Activated B cell treated with CpG ODN at 0.5 μM for 24 hours (primary cell): ENCODE measurements at regions of chr10 and their contacts with region 1.

Region 1: GRCh38 chr10:30529373-30529998 is 95.5 kb downstream of the MAP3K8 start:
- DNase-seq: peak; percentile 78
- ATAC-seq: peak; percentile 84
- H3K4me3 Mint-ChIP-seq: peak overlapping the region; percentile 86
- H3K27ac Mint-ChIP-seq: peak overlapping the region; percentile 98
- H3K4me1 Mint-ChIP-seq: peaks cover 76% of the 10 kb centered on the region
- H3K27me3 Mint-ChIP-seq: no peaks in the 10 kb centered on the region
- CTCF ChIP-seq: no peak

Region 2: DNA sequence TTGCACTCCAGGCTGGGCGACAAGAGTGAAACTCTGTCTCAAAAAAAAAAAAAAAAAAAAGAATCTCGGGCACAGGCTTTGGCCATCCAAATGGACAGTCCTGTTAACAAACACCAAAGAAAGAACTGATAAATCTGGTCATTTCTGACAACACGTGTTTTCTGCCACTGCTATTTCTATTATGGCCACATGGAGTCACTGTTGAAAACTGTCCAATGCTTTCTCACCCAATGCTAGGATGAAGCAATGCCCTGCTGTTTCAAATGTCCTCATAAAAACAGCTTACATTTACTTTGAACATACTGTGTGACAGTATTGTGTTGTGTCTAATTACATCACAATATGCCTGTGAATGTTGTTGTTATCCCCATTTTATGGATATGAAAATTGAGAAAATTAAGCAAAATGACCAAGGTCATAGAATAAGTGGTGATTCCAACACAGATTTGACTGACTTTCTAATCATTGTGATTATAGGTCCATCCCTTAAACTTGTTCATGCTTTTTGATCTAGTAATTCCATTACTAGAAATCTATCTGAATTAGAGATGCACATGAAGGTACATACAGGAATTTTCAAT is 115.4 kb before region 1 on chr10:
- CTCF ChIA-PET with region 1: interaction called, 42 read pairs
- POLR2A ChIA-PET with region 1: interaction called, 24 read pairs
- intact Hi-C with region 1: loop called (anchors 1 kb)
- DNase-seq: no peak
- ATAC-seq: peak; percentile 67
- H3K4me3 Mint-ChIP-seq: no peak overlapping the region
- H3K27ac Mint-ChIP-seq: peak overlapping the region; percentile 73
- H3K4me1 Mint-ChIP-seq: peaks cover 45% of the 10 kb centered on the region
- H3K27me3 Mint-ChIP-seq: no peaks in the 10 kb centered on the region
- CTCF ChIP-seq: peak; percentile 70

Region 3: DNA sequence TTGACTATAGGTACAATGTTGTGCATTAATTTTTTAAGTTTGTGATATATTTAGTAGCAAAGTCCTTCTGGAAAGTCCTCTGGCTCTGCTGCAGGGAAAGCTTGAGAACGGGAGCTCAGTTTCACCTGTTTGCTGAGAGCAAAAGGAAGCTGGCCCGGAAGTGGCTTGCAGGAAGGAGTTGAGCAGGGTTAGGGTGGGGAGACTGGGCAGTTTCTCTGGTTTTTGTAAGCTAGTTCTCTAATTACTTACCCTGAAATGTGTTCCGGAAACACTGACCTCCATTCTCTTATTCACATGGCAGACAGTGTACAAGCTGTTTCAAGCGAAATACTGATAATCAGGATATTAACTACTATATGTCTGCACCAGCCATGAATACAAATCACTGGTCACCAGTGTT is 73.2 kb before region 1 on chr10:
- CTCF ChIA-PET with region 1: interaction called, 20 read pairs
- POLR2A ChIA-PET with region 1: interaction called, 23 read pairs
- intact Hi-C with region 1: loop called (anchors 1 kb)
- DNase-seq: no peak
- ATAC-seq: peak; percentile 63
- H3K4me3 Mint-ChIP-seq: peak overlapping the region; percentile 53
- H3K27ac Mint-ChIP-seq: peak overlapping the region; percentile 81
- H3K4me1 Mint-ChIP-seq: peaks cover 46% of the 10 kb centered on the region
- H3K27me3 Mint-ChIP-seq: no peaks in the 10 kb centered on the region
- CTCF ChIP-seq: no peak

Region 4: GRCh38 chr10:30488316-30488715 is 41.2 kb before region 1 on chr10:
- CTCF ChIA-PET with region 1: interaction called, 6 read pairs
- POLR2A ChIA-PET with region 1: interaction called, 23 read pairs
- intact Hi-C with region 1: loop called (anchors 1 kb)
- DNase-seq: no peak
- ATAC-seq: peak; percentile 70
- H3K4me3 Mint-ChIP-seq: peak overlapping the region; percentile 66
- H3K27ac Mint-ChIP-seq: peak overlapping the region; percentile 89
- H3K4me1 Mint-ChIP-seq: peaks cover 63% of the 10 kb centered on the region
- H3K27me3 Mint-ChIP-seq: no peaks in the 10 kb centered on the region
- CTCF ChIP-seq: no peak

Region 5: GRCh38 chr10:30502266-30503060 is 27.0 kb before region 1 on chr10:
- CTCF ChIA-PET with region 1: no interaction called
- POLR2A ChIA-PET with region 1: interaction called, 17 read pairs
- intact Hi-C with region 1: loop called (anchors 2 kb)
- DNase-seq: no peak
- ATAC-seq: peak; percentile 85
- H3K4me3 Mint-ChIP-seq: peak overlapping the region; percentile 79
- H3K27ac Mint-ChIP-seq: peak overlapping the region; percentile 83
- H3K4me1 Mint-ChIP-seq: peaks cover 89% of the 10 kb centered on the region
- H3K27me3 Mint-ChIP-seq: no peaks in the 10 kb centered on the region
- CTCF ChIP-seq: no peak

Region 6: GRCh38 chr10:30591249-30591670 is 61.8 kb after region 1 on chr10:
- CTCF ChIA-PET with region 1: interaction called, 26 read pairs
- POLR2A ChIA-PET with region 1: interaction called, 3 read pairs
- intact Hi-C with region 1: loop called (anchors 1 kb)
- DNase-seq: no peak
- ATAC-seq: peak; percentile 23
- H3K4me3 Mint-ChIP-seq: no peak overlapping the region
- H3K27ac Mint-ChIP-seq: no peak overlapping the region
- H3K4me1 Mint-ChIP-seq: peaks cover 37% of the 10 kb centered on the region
- H3K27me3 Mint-ChIP-seq: peaks cover 9% of the 10 kb centered on the region
- CTCF ChIP-seq: peak; percentile 62